Panc1 (cell line): ENCODE measurements at regions of chr1 and their contacts with region 1.

Region 1: GRCh38 chr1:162056043-162056442 is 13.4 kb upstream of the NOS1AP start:
- DNase-seq: peak; percentile 63
- ATAC-seq: peak; percentile 92
- H3K4me3 ChIP-seq: no peak overlapping the region
- H3K27ac ChIP-seq: peak overlapping the region; percentile 76
- H3K4me1 ChIP-seq: peaks cover 17% of the 10 kb centered on the region
- H3K27me3 ChIP-seq: no peaks in the 10 kb centered on the region
- CTCF ChIP-seq: peak; percentile 96

Region 2: GRCh38 chr1:162019006-162019405 is 37.0 kb before region 1 on chr1:
- CTCF ChIA-PET with region 1: no interaction called
- POLR2A ChIA-PET with region 1: no interaction called
- in situ Hi-C with region 1: no loop called
- intact Hi-C with region 1: no loop called
- DNase-seq: no peak
- ATAC-seq: no peak
- H3K4me3 ChIP-seq: no peak overlapping the region
- H3K27ac ChIP-seq: no peak overlapping the region
- H3K4me1 ChIP-seq: no peaks in the 10 kb centered on the region
- H3K27me3 ChIP-seq: peaks cover 4% of the 10 kb centered on the region
- CTCF ChIP-seq: no peak

Region 3: DNA sequence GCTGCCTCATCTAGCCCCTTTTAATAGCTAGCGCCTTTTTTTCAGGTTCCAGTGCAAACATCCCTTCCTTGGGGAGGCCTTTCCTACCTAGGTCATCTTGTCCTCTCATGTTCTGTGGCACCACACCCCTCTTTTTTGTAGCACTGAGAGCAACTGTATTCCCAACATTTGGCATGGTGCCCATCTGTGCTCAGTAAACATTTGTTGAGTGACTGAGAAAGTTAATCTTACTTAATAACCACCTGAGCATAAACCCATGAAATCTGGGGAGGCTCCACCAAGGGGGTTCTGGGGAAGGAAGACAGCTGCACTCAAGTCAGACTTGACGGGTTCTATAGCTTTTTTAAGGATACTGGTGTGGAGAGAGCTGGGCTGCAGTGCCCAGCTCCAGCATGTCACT is 103.5 kb after region 1 on chr1:
- CTCF ChIA-PET with region 1: no interaction called
- POLR2A ChIA-PET with region 1: no interaction called
- in situ Hi-C with region 1: no loop called
- intact Hi-C with region 1: no loop called
- DNase-seq: no peak
- ATAC-seq: no peak
- H3K4me3 ChIP-seq: no peak overlapping the region
- H3K27ac ChIP-seq: peak overlapping the region; percentile 60
- H3K4me1 ChIP-seq: peaks cover 58% of the 10 kb centered on the region
- H3K27me3 ChIP-seq: no peaks in the 10 kb centered on the region
- CTCF ChIP-seq: no peak

Region 4: DNA sequence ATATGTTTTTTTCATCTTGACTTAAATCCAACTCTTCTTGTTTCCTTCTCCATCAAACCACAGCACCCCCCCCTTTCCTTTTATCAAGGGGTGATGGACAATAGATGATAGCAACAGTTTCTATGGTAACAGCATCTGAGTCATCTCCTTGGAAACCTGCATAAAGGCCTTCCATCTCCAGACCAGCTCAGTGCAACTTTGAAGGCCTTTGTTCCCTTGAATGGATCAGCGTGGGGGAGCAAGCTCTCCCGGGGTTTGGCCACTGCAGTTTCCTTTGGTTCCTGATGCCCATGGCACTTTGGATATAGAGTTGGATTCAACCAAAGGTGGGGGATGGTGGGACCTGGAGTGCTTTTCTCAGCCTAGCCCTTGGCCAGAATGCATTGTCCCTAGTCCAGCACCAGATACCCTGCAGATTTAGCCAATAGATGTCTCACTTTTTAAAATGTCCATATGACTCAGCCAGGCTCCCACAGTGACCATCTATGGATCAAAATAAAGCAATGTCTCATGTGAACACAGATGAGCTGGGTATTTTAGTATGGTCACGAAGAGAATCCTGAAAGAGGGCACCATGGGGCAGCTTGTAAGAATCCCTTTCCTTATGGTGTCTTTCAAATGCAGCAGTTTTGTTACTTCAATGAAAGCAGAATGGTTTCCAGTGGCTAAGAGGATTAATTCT is 193.0 kb after region 1 on chr1:
- CTCF ChIA-PET with region 1: no interaction called
- POLR2A ChIA-PET with region 1: no interaction called
- in situ Hi-C with region 1: no loop called
- intact Hi-C with region 1: no loop called
- DNase-seq: no peak
- ATAC-seq: no peak
- H3K4me3 ChIP-seq: no peak overlapping the region
- H3K27ac ChIP-seq: no peak overlapping the region
- H3K4me1 ChIP-seq: peaks cover 4% of the 10 kb centered on the region; the same call in 1 of the 2 replicates
- H3K27me3 ChIP-seq: no peaks in the 10 kb centered on the region
- CTCF ChIP-seq: no peak

Region 5: GRCh38 chr1:162276493-162276892 is 220.4 kb after region 1 on chr1:
- CTCF ChIA-PET with region 1: interaction called, 6 read pairs
- POLR2A ChIA-PET with region 1: no interaction called
- in situ Hi-C with region 1: no loop called
- intact Hi-C with region 1: loop called (anchors 1 kb)
- DNase-seq: peak; percentile 10
- ATAC-seq: peak; percentile 74
- H3K4me3 ChIP-seq: no peak overlapping the region
- H3K27ac ChIP-seq: peak overlapping the region; percentile 56; the same call in 1 of the 2 replicates
- H3K4me1 ChIP-seq: peaks cover 33% of the 10 kb centered on the region
- H3K27me3 ChIP-seq: no peaks in the 10 kb centered on the region
- CTCF ChIP-seq: peak; percentile 66

Region 6: GRCh38 chr1:162391790-162392563 is 335.9 kb after region 1 on chr1:
- CTCF ChIA-PET with region 1: interaction called, 3 read pairs
- POLR2A ChIA-PET with region 1: no interaction called
- in situ Hi-C with region 1: no loop called
- intact Hi-C with region 1: loop called (anchors 1 kb)
- DNase-seq: peak; percentile 22
- ATAC-seq: peak; percentile 66
- H3K4me3 ChIP-seq: no peak overlapping the region
- H3K27ac ChIP-seq: peak overlapping the region; percentile 76
- H3K4me1 ChIP-seq: peaks cover 22% of the 10 kb centered on the region
- H3K27me3 ChIP-seq: peaks cover 8% of the 10 kb centered on the region; the same call in 1 of the 2 replicates
- CTCF ChIP-seq: peak; percentile 86